ENCODE measurements at regions of chr1 and their contacts with region 1.

Region 1: DNA sequence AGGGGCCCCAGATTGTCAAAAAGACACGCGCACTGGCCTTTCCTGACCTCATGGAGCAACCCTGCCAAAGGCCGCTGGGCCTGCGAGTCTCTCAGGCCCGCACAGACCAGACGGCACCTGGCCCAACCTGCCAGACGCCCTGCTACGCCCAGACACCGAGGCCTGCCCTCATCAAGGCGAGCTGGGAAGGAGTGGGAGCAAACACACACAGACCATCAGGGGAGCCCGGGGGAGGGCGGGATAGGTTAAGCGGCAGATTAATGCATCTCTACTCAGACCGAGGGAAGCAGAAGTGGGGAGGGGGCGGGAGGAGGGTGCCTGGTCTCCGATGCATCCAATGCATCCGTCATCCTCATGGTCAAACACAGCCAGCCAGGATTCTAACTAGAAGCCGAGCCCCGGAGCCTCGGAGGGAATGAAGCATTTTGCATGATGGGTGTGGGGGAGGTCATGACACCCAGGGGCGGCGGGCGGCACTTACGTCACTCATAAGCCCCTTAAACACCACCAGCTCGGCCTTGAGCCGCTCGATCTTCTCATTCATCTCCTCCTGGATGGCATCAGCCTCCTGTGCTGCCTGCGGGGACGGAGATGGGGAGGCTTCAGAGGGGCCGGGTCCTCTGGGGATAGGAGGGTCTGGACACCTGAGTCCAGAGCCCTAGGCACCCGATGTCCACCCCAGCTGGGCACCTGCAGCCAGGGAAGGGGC is 17.0 kb upstream of the ALDH4A1 start:
- DNase-seq: no peak
- H3K4me3 ChIP-seq: no peak overlapping the region
- H3K27ac ChIP-seq: no peak overlapping the region
- H3K4me1 ChIP-seq: peaks cover 20 to 29% of the 10 kb centered on the region in 2 donors
- H3K27me3 ChIP-seq: no peaks in the 10 kb centered on the region
- CTCF ChIP-seq: no peak
- POLR2A ChIP-seq: no peak

Region 2: GRCh38 chr1:18956369-18957135 is 37.2 kb after region 1 on chr1 and contains the start of gene IFFO2:
- intact Hi-C with region 1: loop called in 1 of 2 experiments (anchors 5 kb)
- DNase-seq: peak; percentile 97 to 99 (median 99)
- H3K4me3 ChIP-seq: peak within 1 kb of the TSS; percentile 7 to 92 (median 41)
- H3K27ac ChIP-seq: peak within 1 kb of the TSS in 3 of 5 donors; percentile 73 to 96 (median 78)
- H3K4me1 ChIP-seq: peaks cover 14 to 35% of the 10 kb centered on the region in 2 donors
- H3K27me3 ChIP-seq: no peaks in the 10 kb centered on the region
- CTCF ChIP-seq: peak in 1 of 6 experiments; percentile 7
- POLR2A ChIP-seq: peak; percentile 77 to 90
- total RNA-seq, gene IFFO2: 8.0 to 23.4 (median 17.9) TPM

Region 3: DNA sequence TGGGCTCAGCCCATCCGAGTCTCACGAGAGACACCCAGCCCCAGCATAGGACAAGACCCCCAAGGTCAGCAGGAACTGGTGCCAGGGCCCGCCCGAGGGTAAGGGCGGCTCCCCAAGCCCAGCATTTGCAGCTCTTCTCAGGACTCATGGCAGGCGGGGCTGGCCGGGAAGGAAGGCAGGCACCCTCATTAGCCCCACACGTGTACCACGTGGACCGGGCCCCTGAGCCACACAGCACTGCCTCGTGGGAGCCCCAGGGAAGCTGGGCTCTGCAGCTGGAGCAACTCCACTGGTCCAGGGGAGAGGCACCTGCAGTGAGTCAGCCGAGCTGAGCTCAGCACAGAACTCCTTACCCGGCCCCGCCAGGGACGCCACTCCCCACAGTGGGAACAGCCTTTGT is 134.9 kb after region 1 on chr1:
- intact Hi-C with region 1: no loop called
- DNase-seq: no peak
- H3K4me3 ChIP-seq: no peak overlapping the region
- H3K27ac ChIP-seq: no peak overlapping the region
- H3K4me1 ChIP-seq: peaks cover 0 to 4% of the 10 kb centered on the region in 2 donors
- H3K27me3 ChIP-seq: no peaks in the 10 kb centered on the region
- CTCF ChIP-seq: no peak
- POLR2A ChIP-seq: no peak

Region 4: DNA sequence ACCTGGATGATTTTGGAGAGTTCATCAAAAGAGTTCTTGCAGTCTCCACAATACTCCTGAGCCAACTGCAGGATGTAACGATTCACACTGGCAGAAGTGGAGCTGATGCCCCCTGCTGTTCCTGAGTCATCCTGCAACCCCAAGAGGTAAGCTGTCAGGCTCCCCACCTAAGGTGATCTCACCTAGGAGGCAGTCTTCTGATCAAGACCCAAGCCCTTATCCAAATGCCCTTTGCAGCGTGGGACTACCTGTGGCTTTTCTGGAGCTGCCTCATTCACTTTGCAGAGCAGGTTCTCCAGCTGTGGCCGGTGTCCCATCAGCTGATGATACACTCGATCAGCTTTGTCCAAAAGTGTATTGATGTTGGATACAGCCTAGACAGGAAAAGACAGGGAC is 194.3 kb after region 1 on chr1:
- intact Hi-C with region 1: no loop called
- DNase-seq: peak in 3 of 7 donors; percentile 10 to 53 (median 27)
- H3K4me3 ChIP-seq: no peak overlapping the region
- H3K27ac ChIP-seq: no peak overlapping the region
- H3K4me1 ChIP-seq: peaks cover 4 to 8% of the 10 kb centered on the region in 2 donors
- H3K27me3 ChIP-seq: no peaks in the 10 kb centered on the region
- CTCF ChIP-seq: peak in 3 of 6 experiments; percentile 27 to 33 (median 29)
- POLR2A ChIP-seq: no peak

Measured in adrenal gland (tissue), 19 donors.